CD4-positive, alpha-beta T cell (primary cell): ENCODE measurements at regions of chr16 and their contacts with region 1.

Region 1: GRCh38 chr16:67521095-67521804 is 7.4 kb upstream of the RIPOR1 start:
- DNase-seq: peak; percentile 93 to 99 (median 97)
- ATAC-seq: peak; percentile 90
- H3K4me3 ChIP-seq: peak overlapping the region; percentile 67
- H3K4me3 Mint-ChIP-seq: peak overlapping the region; percentile 87
- H3K27ac ChIP-seq: peak overlapping the region; percentile 96 to 99
- H3K27ac Mint-ChIP-seq: peak overlapping the region; percentile 90
- H3K4me1 ChIP-seq: peaks cover 22% of the 10 kb centered on the region
- H3K4me1 Mint-ChIP-seq: peaks cover 15% of the 10 kb centered on the region
- H3K27me3 ChIP-seq: no peaks in the 10 kb centered on the region
- H3K27me3 Mint-ChIP-seq: no peaks in the 10 kb centered on the region
- CTCF ChIP-seq: peak; percentile 92

Region 2: DNA sequence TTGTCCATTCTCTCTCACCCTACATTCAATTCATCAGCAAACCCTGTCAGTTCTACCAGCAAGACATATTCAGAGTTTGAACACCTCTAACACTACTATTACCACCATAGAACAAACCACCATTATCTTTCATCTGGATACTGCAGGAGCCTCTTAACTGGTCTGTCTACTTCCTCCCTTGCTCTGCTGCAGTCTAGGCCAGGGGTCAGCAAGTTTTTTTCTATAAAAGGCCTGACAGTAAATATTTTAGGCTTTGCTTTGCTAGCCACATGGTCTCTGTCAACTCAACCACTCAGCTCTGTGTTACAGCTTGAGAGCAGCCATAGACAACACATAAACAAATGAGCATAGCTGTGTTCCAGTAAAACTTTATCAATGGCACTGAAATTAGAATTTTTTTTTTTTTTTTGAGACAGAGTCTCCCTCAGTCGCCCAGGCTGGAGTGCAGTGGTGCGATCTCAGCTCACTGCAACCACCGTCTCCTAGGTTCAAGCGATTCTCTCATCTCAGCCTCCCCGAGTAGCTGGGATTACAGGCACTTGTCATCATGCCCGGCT is 208.5 kb before region 1 on chr16:
- CTCF ChIA-PET with region 1: no interaction called
- POLR2A ChIA-PET with region 1: no interaction called
- intact Hi-C with region 1: no loop called
- DNase-seq: no peak
- ATAC-seq: no peak
- H3K4me3 ChIP-seq: no peak overlapping the region
- H3K4me3 Mint-ChIP-seq: no peak overlapping the region
- H3K27ac ChIP-seq: no peak overlapping the region
- H3K27ac Mint-ChIP-seq: no peak overlapping the region
- H3K4me1 ChIP-seq: no peaks in the 10 kb centered on the region
- H3K4me1 Mint-ChIP-seq: no peaks in the 10 kb centered on the region
- H3K27me3 ChIP-seq: peaks cover 0 to 8% of the 10 kb centered on the region in 2 experiments
- H3K27me3 Mint-ChIP-seq: no peaks in the 10 kb centered on the region
- CTCF ChIP-seq: no peak

Region 3: DNA sequence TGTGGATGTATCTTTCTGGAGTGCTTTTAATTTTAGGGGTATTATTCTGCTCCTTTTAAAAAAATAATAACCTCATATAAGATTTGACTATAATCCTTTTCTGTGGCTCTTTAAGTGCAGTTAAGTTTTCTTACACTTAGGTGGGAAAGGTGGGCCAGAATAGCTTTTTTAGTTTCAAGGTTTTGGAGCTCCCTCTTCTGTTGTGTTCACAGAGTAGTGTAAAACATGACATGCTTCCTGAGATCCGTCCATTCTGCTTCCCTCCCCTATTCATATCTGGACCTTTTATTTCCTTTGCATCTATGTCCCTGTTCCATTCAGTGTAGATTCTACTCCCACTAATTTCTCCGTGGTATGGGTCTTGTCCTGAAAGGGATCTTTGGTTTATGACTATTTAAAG is 181.8 kb before region 1 on chr16:
- CTCF ChIA-PET with region 1: no interaction called
- POLR2A ChIA-PET with region 1: no interaction called
- intact Hi-C with region 1: no loop called
- DNase-seq: no peak
- ATAC-seq: no peak
- H3K4me3 ChIP-seq: no peak overlapping the region
- H3K4me3 Mint-ChIP-seq: no peak overlapping the region
- H3K27ac ChIP-seq: no peak overlapping the region
- H3K27ac Mint-ChIP-seq: no peak overlapping the region
- H3K4me1 ChIP-seq: no peaks in the 10 kb centered on the region
- H3K4me1 Mint-ChIP-seq: no peaks in the 10 kb centered on the region
- H3K27me3 ChIP-seq: no peaks in the 10 kb centered on the region
- H3K27me3 Mint-ChIP-seq: no peaks in the 10 kb centered on the region
- CTCF ChIP-seq: no peak

Region 4: DNA sequence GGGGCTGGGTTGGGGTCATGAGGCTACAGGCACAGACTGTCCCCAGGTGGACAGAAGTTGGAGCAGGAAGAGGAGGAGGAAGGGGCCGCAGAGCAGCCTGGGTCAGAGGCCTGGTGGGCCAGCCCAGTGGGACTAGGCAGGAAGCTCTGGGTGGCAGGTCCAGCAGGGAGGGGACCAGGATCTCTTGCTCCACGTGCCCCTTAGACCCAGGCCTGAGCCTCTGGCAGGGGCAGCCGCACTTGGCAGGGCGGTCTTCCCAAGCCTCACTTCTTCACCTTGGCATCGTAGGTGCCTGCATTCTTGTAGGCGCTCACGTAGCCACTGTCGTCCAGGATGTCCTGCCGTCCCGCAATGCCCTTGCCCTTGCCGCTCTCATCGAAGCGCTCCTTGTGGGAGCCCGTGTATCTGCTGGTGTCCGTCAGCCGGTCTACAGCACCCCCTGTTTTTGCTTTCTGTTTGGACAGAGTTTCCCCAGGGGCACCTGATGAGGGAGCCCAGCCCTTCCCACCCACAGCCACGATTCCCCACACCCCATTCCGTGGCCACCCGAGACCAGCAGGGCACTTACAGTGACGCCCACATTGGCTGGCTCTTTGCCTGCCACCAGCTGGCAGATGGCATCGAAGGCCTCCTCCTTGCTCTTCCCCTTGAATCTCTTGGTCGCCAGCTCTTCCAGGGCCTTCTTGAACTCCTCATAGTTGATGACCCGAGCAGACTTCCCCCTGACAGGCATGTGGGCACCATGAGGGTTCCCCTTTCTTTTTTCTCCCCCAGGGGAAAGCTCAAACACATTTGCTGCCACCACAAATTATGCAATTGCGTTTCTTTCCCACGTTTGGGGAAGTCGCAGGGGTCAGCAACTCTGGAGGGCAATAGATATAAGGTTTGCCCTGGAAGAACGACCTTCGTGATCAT is 131.1 kb before region 1 on chr16:
- CTCF ChIA-PET with region 1: no interaction called
- POLR2A ChIA-PET with region 1: no interaction called
- intact Hi-C with region 1: no loop called
- DNase-seq: peak in 3 of 14 experiments; percentile 19 to 68 (median 67)
- ATAC-seq: no peak
- H3K4me3 ChIP-seq: no peak overlapping the region
- H3K4me3 Mint-ChIP-seq: no peak overlapping the region
- H3K27ac ChIP-seq: no peak overlapping the region
- H3K27ac Mint-ChIP-seq: no peak overlapping the region
- H3K4me1 ChIP-seq: peaks cover 27% of the 10 kb centered on the region
- H3K4me1 Mint-ChIP-seq: peaks cover 8% of the 10 kb centered on the region
- H3K27me3 ChIP-seq: peaks cover 22 to 26% of the 10 kb centered on the region in 2 experiments
- H3K27me3 Mint-ChIP-seq: peaks cover 28% of the 10 kb centered on the region
- CTCF ChIP-seq: no peak

Region 5: DNA sequence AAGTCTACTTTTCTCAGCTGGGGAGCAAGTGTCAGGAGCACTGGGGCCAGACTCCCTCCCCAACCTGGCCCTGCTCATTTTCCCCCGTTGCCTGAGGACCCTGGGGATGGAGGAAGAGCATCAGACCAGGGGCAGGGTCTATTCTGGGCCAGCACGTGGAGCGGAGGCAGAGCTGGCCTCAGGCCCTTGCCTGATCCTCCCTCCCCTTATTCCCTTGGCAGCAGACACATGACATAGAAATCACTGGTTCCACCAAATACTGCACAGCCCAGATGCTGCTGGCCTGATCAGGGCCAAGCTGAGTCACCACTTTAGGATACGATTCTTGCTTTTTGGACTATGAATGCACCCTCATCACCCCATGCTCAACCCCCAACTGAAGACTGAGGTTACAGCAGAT is 22.1 kb before region 1 on chr16:
- CTCF ChIA-PET with region 1: interaction called, 46 read pairs
- POLR2A ChIA-PET with region 1: no interaction called
- intact Hi-C with region 1: no loop called
- DNase-seq: no peak
- ATAC-seq: no peak
- H3K4me3 ChIP-seq: no peak overlapping the region
- H3K4me3 Mint-ChIP-seq: no peak overlapping the region
- H3K27ac ChIP-seq: no peak overlapping the region
- H3K27ac Mint-ChIP-seq: peak overlapping the region; percentile 32
- H3K4me1 ChIP-seq: peaks cover 14% of the 10 kb centered on the region
- H3K4me1 Mint-ChIP-seq: peaks cover 15% of the 10 kb centered on the region
- H3K27me3 ChIP-seq: no peaks in the 10 kb centered on the region
- H3K27me3 Mint-ChIP-seq: no peaks in the 10 kb centered on the region
- CTCF ChIP-seq: no peak

Region 6: DNA sequence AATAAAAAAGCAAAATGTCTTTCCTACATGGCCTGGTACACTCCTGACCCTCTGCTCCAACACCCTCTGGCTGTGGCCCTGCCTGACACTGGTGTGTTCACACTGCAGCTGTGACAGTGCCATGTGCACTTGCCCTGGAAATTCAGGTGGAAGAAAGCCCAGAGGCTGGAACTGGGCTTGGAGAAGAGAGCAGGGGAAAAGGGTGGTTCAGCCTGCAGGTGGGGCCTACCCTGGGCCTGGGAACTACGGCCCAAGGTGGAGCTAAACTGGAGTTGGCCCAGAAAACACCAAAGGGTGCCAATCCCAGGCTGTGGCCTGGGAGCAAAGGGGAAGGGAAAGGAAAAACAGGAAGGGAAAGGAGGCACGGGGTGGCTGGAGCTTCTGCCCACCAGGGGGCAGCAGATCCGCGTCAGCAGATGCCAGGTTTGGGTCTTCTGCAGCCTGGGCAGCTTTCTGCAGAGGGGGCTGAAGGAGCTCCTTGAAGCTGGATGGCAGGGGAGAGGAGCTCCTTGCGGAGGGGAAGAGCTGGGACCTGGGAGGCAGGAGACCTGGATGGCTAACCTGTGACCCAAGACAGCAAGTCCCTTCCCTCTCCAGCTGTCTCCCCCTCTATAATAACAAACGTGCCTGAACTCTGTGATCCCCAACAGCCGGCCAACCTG is 25.6 kb after region 1 on chr16:
- CTCF ChIA-PET with region 1: interaction called, 101 read pairs
- POLR2A ChIA-PET with region 1: interaction called, 16 read pairs
- intact Hi-C with region 1: loop called in 1 of 2 experiments (anchors 1 kb)
- DNase-seq: peak; percentile 61 to 88 (median 72)
- ATAC-seq: peak; percentile 22
- H3K4me3 ChIP-seq: peak overlapping the region; percentile 44
- H3K4me3 Mint-ChIP-seq: peak overlapping the region; percentile 72
- H3K27ac ChIP-seq: peak overlapping the region; percentile 72 to 76
- H3K27ac Mint-ChIP-seq: peak overlapping the region; percentile 92
- H3K4me1 ChIP-seq: peaks cover 51% of the 10 kb centered on the region
- H3K4me1 Mint-ChIP-seq: peaks cover 50% of the 10 kb centered on the region
- H3K27me3 ChIP-seq: no peaks in the 10 kb centered on the region
- H3K27me3 Mint-ChIP-seq: no peaks in the 10 kb centered on the region
- CTCF ChIP-seq: peak; percentile 99

Region 7: GRCh38 chr16:67595033-67595355 is 73.7 kb after region 1 on chr16:
- CTCF ChIA-PET with region 1: interaction called, 15 read pairs
- POLR2A ChIA-PET with region 1: no interaction called
- intact Hi-C with region 1: no loop called
- DNase-seq: peak in 1 of 14 experiments; percentile 12
- ATAC-seq: peak; percentile 44
- H3K4me3 ChIP-seq: no peak overlapping the region
- H3K4me3 Mint-ChIP-seq: no peak overlapping the region
- H3K27ac ChIP-seq: no peak overlapping the region
- H3K27ac Mint-ChIP-seq: peak overlapping the region; percentile 18
- H3K4me1 ChIP-seq: peaks cover 11% of the 10 kb centered on the region
- H3K4me1 Mint-ChIP-seq: peaks cover 58% of the 10 kb centered on the region
- H3K27me3 ChIP-seq: no peaks in the 10 kb centered on the region
- H3K27me3 Mint-ChIP-seq: no peaks in the 10 kb centered on the region
- CTCF ChIP-seq: no peak

Region 8: GRCh38 chr16:67660564-67661028 is 139.3 kb after region 1 on chr16 and contains the start of gene PARD6A:
- CTCF ChIA-PET with region 1: interaction called, 81 read pairs
- POLR2A ChIA-PET with region 1: interaction called, 6 read pairs
- intact Hi-C with region 1: no loop called
- DNase-seq: peak; percentile 86 to 99 (median 93)
- ATAC-seq: peak; percentile 76
- H3K4me3 ChIP-seq: peak within 1 kb of the TSS; percentile 95
- H3K4me3 Mint-ChIP-seq: peak within 1 kb of the TSS; percentile 95
- H3K27ac ChIP-seq: peak within 1 kb of the TSS; percentile 93 to 99
- H3K27ac Mint-ChIP-seq: peak within 1 kb of the TSS; percentile 94
- H3K4me1 ChIP-seq: peaks cover 38% of the 10 kb centered on the region
- H3K4me1 Mint-ChIP-seq: peaks cover 37% of the 10 kb centered on the region
- H3K27me3 ChIP-seq: no peaks in the 10 kb centered on the region
- H3K27me3 Mint-ChIP-seq: no peaks in the 10 kb centered on the region
- CTCF ChIP-seq: no peak
- total RNA-seq, gene PARD6A: 4.5 to 4.7 TPM

Region 9: DNA sequence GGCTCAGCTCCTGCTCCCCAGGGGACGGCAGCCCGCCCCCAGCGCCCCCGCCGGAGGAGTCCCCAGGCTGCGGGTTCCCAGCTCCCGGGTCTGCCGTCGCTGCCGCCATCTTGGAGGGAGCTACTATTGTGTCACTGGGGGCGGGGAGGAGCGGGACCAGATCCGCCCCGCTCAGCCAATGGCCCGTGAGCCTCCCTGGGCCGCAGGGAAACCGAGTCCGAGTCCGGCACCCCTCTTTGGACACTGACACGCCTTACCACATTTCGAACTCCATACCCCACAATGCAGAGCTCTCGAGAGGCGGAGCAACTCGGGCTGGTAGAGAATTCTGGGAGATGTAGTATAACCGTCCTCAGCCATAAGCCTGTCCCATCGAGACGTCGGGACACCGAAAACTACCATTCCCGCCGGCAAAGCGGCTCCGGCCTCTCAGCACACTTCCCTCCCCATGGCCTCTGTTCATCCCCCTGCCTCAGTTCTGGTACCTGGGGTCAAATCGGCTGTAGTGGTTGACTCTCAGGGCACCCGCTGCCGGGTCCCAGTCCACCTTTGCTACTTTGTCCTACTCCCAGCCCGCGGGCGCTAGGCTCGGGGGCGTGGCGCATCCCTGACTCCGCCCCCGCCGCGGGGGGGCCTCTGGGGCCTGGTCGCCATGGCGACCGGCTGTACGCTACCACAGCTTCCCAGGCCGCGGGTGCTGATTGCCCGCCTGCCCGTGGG is 285.3 kb after region 1 on chr16 and contains the starts of genes RANBP10 and TSNAXIP1:
- CTCF ChIA-PET with region 1: interaction called, 5 read pairs
- POLR2A ChIA-PET with region 1: no interaction called
- intact Hi-C with region 1: loop called in 1 of 2 experiments (anchors 5 kb)
- DNase-seq: peak; percentile 90 to 99 (median 93)
- ATAC-seq: peak; percentile 92
- H3K4me3 ChIP-seq: peak within 1 kb of the TSS; percentile 97
- H3K4me3 Mint-ChIP-seq: peak within 1 kb of the TSS; percentile 91
- H3K27ac ChIP-seq: peak within 1 kb of the TSS; percentile 69 to 75
- H3K27ac Mint-ChIP-seq: peak within 1 kb of the TSS; percentile 76
- H3K4me1 ChIP-seq: peaks cover 50% of the 10 kb centered on the region
- H3K4me1 Mint-ChIP-seq: peaks cover 43% of the 10 kb centered on the region
- H3K27me3 ChIP-seq: no peaks in the 10 kb centered on the region
- H3K27me3 Mint-ChIP-seq: no peaks in the 10 kb centered on the region
- CTCF ChIP-seq: no peak
- total RNA-seq, gene RANBP10: 12.0 to 13.6 TPM
- total RNA-seq, gene TSNAXIP1: 0.52 to 0.61 TPM